Dendritic cell treated with granulocyte-macrophage colony-stimulating factor and Interleukin-4, amounts not matched to agents 40 ng/mL and 50 ng/mL, for 4 days (primary cell): ENCODE measurements at regions of chr21 and their contacts with region 1.

Region 1: DNA sequence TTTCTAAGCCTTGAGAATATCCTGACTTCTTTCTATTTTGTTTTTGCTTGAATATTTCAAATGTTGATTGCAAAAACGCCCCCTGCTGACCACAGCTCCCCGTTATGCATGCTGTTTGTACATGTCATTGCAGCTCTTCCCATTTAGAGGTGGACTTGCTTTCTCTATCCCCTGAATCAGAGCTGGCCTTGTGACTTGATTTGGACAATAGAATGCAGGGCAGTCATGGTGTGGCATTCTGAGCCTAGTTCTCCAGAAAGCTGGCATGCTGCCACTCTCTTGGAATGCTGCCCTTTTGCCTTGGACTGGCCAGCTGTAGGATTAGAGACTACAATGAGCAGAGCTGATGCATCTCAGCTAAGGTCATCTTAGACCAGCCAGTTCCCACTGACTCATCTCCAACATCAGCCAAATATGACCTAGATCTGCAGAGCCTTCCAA is 1561.5 kb downstream of the MRPL39 start:
- H3K4me3 Mint-ChIP-seq: no peak overlapping the region
- H3K27ac Mint-ChIP-seq: no peak overlapping the region
- H3K4me1 Mint-ChIP-seq: peaks cover 5% of the 10 kb centered on the region
- H3K27me3 Mint-ChIP-seq: no peaks in the 10 kb centered on the region

Region 2: DNA sequence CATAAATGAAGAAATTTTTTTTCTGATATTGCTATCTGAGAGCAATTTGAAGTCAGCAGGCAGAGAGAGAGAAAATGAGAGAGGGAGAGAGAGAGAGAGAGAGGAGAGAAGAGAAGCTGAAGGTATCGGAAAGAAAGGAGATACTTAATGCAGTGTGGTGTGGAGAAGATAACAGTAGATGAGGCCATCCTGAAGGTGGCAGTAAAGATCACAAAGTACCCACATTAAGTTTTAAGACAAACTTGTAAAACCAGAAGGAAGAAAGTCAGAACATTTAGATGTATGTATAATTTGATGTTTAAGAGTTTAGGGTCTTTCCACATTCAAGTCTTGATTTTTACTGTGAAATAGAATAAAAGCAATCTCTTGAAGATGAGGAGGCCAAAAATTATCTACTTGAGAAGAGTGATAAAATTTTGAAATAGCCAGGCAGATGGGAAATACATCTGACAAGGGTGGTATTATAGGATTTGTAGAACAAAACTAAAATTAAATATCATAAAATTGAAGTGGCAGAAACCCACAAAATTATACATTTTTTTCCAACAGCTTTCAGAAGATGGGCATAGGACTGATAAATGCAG is 191.9 kb before region 1 on chr21:
- intact Hi-C with region 1: loop called (anchors 10 kb)
- H3K4me3 Mint-ChIP-seq: no peak overlapping the region
- H3K27ac Mint-ChIP-seq: no peak overlapping the region
- H3K4me1 Mint-ChIP-seq: no peaks in the 10 kb centered on the region
- H3K27me3 Mint-ChIP-seq: no peaks in the 10 kb centered on the region

Region 3: GRCh38 chr21:23936224-23936623 is 109.6 kb before region 1 on chr21:
- intact Hi-C with region 1: loop called (anchors 5 kb)
- H3K4me3 Mint-ChIP-seq: no peak overlapping the region
- H3K27ac Mint-ChIP-seq: no peak overlapping the region
- H3K4me1 Mint-ChIP-seq: no peaks in the 10 kb centered on the region
- H3K27me3 Mint-ChIP-seq: peaks cover 1% of the 10 kb centered on the region

Region 4: DNA sequence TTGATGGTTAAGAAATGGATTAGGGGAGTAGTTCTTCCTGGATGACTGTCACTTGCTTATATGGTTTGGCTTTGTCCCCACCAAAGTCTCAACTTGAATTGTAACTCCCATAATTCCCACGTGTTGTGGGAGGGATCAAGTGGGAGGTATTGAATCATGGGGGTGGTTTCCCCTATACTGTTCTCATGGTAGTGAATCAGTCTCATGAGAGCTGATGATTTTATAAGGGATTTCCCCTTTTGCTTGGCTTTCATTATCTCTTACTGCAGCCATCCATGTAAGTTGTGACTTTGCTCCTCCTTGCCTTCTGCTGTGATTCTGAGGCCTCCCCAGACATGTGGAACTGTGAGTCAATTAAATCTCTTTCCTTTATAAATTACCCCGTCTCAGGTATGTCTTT is 59.6 kb before region 1 on chr21:
- intact Hi-C with region 1: loop called (anchors 5 kb)
- H3K4me3 Mint-ChIP-seq: no peak overlapping the region
- H3K27ac Mint-ChIP-seq: no peak overlapping the region
- H3K4me1 Mint-ChIP-seq: no peaks in the 10 kb centered on the region
- H3K27me3 Mint-ChIP-seq: peaks cover 60% of the 10 kb centered on the region

Region 5: DNA sequence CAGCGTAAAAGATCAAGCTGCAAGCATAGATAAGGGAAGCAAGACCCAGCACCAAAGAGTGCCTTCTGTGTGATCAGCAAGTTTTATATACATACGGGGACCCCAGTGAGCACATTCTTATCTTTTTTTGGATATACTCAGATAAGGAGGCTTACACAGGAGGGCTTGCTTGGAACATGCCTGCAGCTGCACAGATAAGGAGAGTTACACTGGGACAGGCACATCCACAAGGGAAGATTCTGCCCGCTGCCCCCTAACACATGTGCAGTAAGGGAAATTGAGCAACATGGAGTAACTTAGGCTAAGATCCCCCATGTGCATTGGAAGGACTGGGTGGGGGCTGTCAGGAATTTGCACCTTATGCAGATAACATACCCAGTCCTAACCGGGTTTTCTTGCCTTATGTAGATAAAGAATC is 226.7 kb after region 1 on chr21:
- intact Hi-C with region 1: no loop called
- H3K4me3 Mint-ChIP-seq: no peak overlapping the region
- H3K27ac Mint-ChIP-seq: no peak overlapping the region
- H3K4me1 Mint-ChIP-seq: peaks cover 6% of the 10 kb centered on the region
- H3K27me3 Mint-ChIP-seq: no peaks in the 10 kb centered on the region